Right ventricle myocardium inferior (tissue), 1 donor: ENCODE measurements at regions of chr3 and their contacts with region 1.

Region 1: DNA sequence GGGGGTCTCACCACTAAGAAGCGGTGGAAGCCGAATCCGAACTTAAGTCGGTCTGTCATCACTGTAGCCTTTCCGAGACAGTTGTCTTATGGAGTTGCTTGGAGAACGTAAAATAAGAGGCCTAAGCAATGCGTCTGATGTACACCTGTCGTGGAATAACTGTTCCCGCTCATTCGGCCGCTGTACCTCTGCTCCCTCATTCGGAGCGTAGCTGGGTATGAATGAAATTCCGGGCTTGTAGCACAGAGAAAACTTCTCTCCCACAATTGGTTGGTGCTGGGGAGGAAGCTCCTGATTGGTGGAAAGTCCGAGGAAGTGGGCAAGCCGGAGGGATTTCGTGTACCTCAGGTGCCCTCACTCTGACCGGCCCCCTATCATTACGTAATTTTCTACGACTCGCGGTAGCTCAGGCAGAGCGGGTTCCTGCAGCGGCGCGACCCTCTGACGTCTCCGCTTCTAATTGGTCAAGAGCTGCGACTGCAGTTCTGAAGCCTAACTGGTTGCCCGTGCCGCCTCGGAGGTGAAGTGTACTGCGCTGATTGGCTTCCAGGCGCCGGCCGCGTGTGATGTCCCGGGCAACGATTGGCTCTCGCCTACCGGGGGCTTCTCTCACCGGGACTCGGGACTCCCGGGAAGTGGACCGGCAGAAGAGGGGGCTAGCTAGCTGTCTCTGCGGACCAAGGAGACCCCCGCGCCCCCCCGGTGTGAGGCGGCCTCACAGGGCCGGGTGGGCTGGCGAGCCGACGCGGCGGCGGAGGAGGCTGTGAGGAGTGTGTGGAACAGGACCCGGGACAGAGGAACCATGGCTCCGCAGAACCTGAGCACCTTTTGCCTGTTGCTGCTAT is at the start of gene DNAJB11:
- DNase-seq: peak; percentile 99
- ATAC-seq: peak; percentile 97
- total RNA-seq, gene DNAJB11: 26.5 TPM

Region 2: GRCh38 chr3:186108941-186109865 is 461.1 kb before region 1 on chr3 and contains the start of gene ETV5:
- intact Hi-C with region 1: loop called (anchors 5 kb)
- DNase-seq: peak; percentile 99
- ATAC-seq: peak; percentile 98
- total RNA-seq, gene ETV5: 4.7 TPM

Region 3: DNA sequence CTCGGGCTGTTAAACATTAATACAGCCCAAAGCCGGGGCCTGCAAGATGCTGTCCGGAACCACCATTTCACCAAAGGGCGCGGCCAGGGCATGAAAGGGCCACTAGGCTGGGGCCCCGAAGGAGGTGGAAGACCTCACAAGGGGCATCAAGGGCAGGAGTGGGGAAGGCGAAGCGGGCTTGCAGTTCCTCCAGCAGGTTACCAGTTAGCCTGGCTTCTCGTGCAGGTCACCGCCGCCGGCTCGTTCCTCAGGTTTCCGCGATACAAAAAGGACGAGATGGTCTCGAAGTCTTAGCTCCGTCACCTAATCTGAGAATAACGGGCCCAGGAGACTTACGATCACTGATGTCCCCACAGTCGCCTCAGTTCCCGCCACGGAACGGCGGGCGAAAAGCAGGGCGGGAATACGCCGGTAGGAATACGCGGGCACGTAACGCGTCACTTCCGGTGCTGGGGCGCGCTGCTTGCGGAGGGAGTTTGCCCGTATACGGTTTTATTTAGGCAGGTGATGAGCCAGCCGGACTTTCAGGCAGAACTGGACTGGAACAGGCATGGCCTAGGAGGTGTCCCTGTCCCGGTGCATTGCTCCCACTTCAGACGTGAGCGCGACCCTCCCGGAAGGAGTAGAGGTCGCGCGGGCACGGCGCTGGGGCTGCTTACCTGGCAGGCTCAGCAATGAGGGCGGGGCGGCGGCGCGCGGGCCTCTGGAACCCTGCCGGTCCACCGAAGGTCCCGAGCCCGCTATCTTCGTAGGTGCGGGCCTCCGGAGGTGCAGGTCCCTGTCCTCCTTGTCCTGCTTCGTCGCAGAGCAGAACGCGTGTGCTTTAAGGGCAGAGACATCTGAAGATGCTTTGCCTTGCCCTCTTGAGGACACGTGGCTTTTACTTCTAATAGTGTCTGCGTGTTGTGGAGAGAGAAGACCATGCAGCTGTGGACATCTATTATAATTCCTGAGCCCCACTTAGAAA is 236.1 kb after region 1 on chr3 and contains the start of gene RFC4:
- intact Hi-C with region 1: loop called (anchors 5 kb)
- DNase-seq: peak; percentile 95
- ATAC-seq: peak; percentile 96
- total RNA-seq, gene RFC4: 11.1 TPM

Region 4: DNA sequence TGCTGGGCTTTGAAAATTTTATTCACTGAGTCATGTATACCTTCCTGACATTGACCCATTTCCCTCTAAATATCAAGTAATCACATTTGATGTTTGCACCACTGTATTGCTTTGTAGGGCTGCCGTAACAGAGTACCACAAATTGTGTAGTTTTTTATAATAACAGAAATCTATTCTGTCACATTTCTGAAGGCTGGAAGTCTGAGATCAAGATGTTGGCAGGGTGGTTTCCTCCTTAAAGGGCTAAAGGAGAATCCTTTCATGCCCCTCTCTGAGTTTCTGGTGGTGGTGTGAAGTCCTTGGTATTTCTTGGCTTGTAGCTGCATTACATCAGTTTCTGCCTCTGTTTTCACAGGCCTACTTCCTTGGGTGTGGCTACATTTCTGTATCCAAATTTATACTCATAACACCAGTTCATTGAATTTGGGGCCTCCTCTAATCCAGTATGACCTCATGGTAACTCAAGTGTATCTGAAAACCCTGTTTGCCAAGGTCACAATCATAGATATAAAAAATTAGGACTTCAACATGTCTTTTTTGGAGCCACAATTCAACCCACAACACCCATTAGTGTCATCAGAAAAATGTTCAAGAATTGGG is 330.9 kb after region 1 on chr3:
- intact Hi-C with region 1: no loop called
- DNase-seq: no peak
- ATAC-seq: peak; percentile 60